GM12878 (cell line): ENCODE measurements at regions of chr11 and their contacts with region 1.

Region 1: DNA sequence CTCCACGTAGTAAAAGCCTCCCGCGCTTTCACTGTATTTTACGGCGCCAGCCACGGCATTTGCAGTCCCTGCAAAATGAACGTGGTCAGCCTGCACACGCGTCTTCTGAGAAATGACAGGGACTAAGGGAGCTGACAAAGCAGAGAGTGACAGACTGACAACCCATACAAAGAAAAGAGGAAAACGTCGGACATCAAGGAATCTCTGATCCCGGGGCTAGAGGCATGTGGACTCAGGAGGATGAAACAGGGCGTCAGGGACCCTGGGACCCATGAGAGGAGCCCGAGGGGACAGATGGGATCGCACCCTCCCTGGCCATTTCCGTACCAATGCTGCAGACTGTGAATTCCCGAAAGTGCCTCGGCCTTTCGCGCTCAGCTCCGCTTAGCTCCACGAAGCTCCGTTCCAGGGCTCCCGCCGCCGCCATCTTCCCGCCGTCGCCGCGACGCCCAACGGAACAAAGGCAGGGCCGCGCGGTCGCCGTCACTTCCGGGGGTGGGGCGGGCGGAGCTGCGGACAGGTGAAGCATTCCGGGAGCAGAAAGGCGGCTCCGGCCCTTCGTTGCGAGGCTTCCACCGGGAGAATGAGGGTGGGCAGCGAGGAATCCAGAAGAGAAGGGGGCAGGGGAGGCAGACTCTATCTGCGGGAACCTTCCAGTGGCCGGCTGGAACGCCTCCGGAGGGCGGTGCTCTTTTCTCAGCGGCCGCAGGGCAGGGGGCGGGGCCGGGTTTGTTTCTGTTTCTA is at the start of gene NUP160:
- DNase-seq: no peak
- ATAC-seq: peak; percentile 90
- H3K4me3 ChIP-seq: peak within 1 kb of the TSS; percentile 98
- H3K27ac ChIP-seq: peak within 1 kb of the TSS; percentile 84
- H3K4me1 ChIP-seq: peaks cover 33% of the 10 kb centered on the region
- H3K27me3 ChIP-seq: no peaks in the 10 kb centered on the region
- CTCF ChIP-seq: no peak
- EP300 ChIP-seq: 0 out of 4 replicates have a peak, but pooled peaks of 1 of the 2 experiments have one; percentile 29
- POLR2A ChIP-seq: peak; percentile 100
- RAD21 ChIP-seq: no peak
- polyA plus RNA-seq, gene NUP160: 24.0 to 32.9 TPM

Region 2: DNA sequence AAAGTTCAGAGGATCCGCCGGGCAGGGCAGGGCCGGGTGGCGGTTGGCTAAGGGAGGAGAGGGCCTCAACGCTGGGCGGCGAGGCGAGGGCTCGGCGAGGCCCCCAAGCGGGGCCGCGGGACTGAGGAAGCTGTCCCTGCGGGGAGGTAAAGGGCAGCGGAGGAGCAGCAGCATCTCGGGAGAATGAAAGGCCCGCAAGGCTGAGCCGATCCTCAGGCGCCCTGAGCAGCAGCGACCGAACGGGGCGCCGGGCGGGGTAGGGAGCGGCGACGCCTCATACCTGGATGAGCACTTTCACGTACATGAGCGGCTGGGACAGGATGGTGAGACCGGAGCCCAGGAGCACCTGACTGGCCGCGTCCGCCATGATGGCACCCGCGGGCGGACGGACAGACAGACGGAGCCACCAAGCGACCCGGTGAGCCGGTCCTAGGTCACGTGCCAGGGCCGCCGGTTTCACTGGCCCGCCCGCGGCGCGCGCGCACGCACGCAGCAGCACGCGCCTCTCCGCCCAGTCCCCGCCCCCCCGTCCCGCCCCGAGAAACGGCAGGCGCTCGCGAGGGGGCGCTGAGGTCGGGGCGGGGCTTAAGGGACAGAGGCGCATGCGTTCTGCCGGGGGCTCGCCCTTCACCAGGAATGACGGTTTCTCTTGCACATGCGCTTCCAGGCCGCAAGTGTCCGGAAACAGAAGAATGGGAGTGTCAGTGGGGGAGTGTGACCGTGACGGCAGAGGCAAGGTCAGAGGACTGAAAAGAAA is 205.8 kb before region 1 on chr11 and contains the start of gene MTCH2:
- CTCF ChIA-PET with region 1: no interaction called
- POLR2A ChIA-PET with region 1: no interaction called
- RAD21 ChIA-PET with region 1: no interaction called
- SMC1A ChIA-PET with region 1: interaction called, 4 read pairs
- in situ Hi-C with region 1: no loop called
- intact Hi-C with region 1: loop called (anchors 5 kb)
- DNase-seq: peak; percentile 92
- ATAC-seq: peak; percentile 96
- H3K4me3 ChIP-seq: peak within 1 kb of the TSS; percentile 81
- H3K27ac ChIP-seq: peak within 1 kb of the TSS; percentile 90
- H3K4me1 ChIP-seq: peaks cover 7% of the 10 kb centered on the region
- H3K27me3 ChIP-seq: no peaks in the 10 kb centered on the region
- CTCF ChIP-seq: peak in 2 of 3 experiments; percentile 22 to 39; a peak in 3 of 6 replicates
- EP300 ChIP-seq: no peak
- POLR2A ChIP-seq: peak; percentile 98
- RAD21 ChIP-seq: no peak
- polyA plus RNA-seq, gene MTCH2: 338 to 341 TPM

Region 3: DNA sequence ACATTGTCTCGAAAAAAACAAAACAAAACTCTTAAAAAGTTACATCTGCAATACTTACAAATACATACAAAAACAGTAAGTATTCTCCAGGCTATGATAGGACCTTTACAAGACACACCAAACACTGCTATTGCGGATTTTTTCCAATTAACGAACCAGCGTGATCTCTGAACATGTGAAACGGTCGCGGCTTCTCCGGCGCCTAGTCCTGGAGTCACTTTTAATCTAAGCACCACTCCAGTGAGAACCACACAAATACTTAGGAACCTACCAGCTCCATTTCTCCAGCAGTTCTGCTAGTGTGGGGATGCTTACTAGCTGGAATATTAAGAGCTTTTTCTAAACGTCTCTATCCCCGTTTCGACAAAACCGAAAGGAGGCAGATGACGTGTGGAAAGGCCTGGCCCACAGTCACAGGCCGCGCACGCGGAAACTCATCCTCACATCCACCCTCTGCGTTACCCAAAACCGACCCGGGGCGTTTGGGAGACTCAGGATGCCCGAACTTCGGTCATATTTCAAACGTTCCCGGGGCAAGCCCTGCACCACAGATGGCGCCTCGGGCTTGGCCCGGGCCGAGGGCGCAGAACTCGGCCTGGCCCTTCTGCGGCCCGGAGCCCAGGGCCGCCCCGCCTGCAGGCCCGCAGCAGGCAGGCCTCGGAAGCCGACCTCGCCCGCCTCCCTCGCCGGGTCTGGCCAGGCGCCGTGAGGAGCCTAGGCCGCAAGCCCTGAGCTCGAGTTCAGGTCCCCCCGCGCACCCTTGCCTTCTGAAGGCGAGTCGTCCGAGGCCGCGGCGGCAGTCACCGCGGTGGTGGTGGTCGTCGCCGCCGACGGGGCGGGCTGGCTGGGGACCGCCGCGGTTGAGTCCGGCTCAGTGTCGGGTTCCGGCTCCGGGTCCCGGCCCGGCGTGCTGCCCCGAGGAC is 81.5 kb before region 1 on chr11:
- CTCF ChIA-PET with region 1: interaction called, 11 read pairs
- POLR2A ChIA-PET with region 1: interaction called, 3 read pairs
- RAD21 ChIA-PET with region 1: no interaction called
- SMC1A ChIA-PET with region 1: interaction called, 3 read pairs
- in situ Hi-C with region 1: no loop called
- intact Hi-C with region 1: loop called (anchors 5 kb)
- DNase-seq: no peak
- ATAC-seq: peak; percentile 61
- H3K4me3 ChIP-seq: peak overlapping the region; percentile 83
- H3K27ac ChIP-seq: peak overlapping the region; percentile 99
- H3K4me1 ChIP-seq: no peaks in the 10 kb centered on the region
- H3K27me3 ChIP-seq: no peaks in the 10 kb centered on the region
- CTCF ChIP-seq: no peak
- EP300 ChIP-seq: no peak
- POLR2A ChIP-seq: no peak; the same call in 1 of the 2 replicates
- RAD21 ChIP-seq: no peak

Region 4: GRCh38 chr11:47879259-47880158 is 31.4 kb after region 1 on chr11:
- CTCF ChIA-PET with region 1: no interaction called
- POLR2A ChIA-PET with region 1: no interaction called
- RAD21 ChIA-PET with region 1: no interaction called
- SMC1A ChIA-PET with region 1: no interaction called
- in situ Hi-C with region 1: no loop called
- intact Hi-C with region 1: no loop called
- DNase-seq: no peak
- ATAC-seq: peak; percentile 72
- H3K4me3 ChIP-seq: no peak overlapping the region
- H3K27ac ChIP-seq: peak overlapping the region; percentile 75
- H3K4me1 ChIP-seq: peaks cover 18% of the 10 kb centered on the region
- H3K27me3 ChIP-seq: no peaks in the 10 kb centered on the region
- CTCF ChIP-seq: no peak
- EP300 ChIP-seq: no peak
- POLR2A ChIP-seq: no peak
- RAD21 ChIP-seq: no peak

Region 5: DNA sequence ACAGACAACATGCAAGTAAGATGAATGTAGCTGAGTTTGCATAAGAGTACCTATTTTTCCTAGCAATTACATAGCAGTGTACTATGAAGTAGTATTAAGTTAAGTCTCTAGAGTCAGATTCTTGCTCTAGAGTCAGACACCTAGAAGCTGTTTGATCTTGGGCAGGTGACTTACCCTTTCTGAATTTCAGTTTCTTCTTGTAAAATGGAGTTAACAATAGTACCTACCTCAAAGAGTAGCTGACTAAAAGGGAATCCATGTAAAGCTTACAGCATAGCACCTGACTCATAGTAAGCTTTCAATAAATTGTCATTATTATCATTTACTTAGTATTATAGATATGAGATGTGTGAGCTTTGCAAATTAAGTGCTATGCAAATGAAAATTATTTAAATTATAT is 84.5 kb after region 1 on chr11:
- CTCF ChIA-PET with region 1: no interaction called
- POLR2A ChIA-PET with region 1: no interaction called
- RAD21 ChIA-PET with region 1: no interaction called
- SMC1A ChIA-PET with region 1: no interaction called
- in situ Hi-C with region 1: no loop called
- intact Hi-C with region 1: loop called (anchors 5 kb)
- DNase-seq: no peak
- ATAC-seq: peak; percentile 54; the same call in 2 of the 3 replicates
- H3K4me3 ChIP-seq: no peak overlapping the region
- H3K27ac ChIP-seq: no peak overlapping the region
- H3K4me1 ChIP-seq: peaks cover 4% of the 10 kb centered on the region
- H3K27me3 ChIP-seq: peaks cover 0 to 2% of the 10 kb centered on the region in 2 experiments; a peak in 2 of 4 replicates
- CTCF ChIP-seq: no peak
- EP300 ChIP-seq: no peak
- POLR2A ChIP-seq: no peak
- RAD21 ChIP-seq: no peak